ENCODE measurements at regions of chr9 and their contacts with region 1.

Region 1: DNA sequence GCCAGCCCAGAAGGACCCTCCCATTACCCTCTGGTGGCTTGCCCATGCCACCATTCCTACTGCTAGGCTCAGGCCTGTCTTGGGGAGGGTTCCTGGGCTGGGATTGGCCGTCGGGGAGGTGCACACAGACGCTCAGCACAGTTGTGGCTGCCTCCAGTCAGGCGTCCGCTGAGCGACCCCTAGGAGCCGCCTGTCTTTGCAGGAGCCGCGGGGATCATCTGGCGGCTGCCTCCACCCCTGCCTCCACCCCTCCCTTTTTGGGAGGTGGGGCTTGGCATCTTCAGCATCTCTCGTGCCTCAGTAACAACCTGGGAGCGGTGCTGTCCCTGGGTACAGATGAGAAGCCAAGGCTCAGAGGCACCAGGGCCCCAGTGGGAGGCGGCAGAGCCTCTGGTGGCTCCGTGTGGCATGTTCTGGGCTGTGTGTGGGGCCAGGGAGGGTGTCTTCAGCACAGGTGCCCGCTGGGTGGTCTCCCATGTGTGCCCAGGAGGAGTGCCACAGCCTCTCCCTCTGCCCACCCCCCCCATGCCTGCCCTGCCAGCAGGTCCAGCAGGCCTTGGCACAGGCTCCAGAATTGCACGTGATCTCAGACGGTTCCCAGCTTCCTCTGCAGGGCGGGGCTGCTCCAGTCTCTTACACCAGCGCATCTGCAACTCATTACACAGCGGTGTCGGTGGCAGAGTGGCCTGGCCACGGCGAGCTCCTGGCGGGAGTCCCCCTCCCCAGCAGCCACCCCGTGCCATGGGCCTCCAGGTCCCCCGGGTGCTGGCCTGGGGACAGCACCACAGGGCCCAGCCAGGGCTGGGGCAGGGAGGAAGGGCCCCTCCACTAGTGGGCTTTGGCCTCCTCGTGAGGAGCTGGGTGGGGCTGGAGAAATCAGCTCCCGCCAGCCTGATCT is 39.8 kb downstream of the RXRA start:
- DNase-seq: peak; percentile 89 to 96 (median 91)
- ATAC-seq: peak; percentile 83 to 90 (median 86)
- H3K4me3 ChIP-seq: peak overlapping the region in 9 of 12 donors; percentile 9 to 37 (median 23)
- H3K27ac ChIP-seq: peak overlapping the region in 11 of 12 donors; percentile 45 to 93 (median 80)
- H3K4me1 ChIP-seq: peaks cover 15 to 92% (median 68%) of the 10 kb centered on the region in 12 donors
- H3K27me3 ChIP-seq: no peaks in the 10 kb centered on the region
- CTCF ChIP-seq: peak in 4 of 12 donors; percentile 12 to 38 (median 26)
- POLR2A ChIP-seq: peak in 1 of 2 donors; percentile 49

Region 2: DNA sequence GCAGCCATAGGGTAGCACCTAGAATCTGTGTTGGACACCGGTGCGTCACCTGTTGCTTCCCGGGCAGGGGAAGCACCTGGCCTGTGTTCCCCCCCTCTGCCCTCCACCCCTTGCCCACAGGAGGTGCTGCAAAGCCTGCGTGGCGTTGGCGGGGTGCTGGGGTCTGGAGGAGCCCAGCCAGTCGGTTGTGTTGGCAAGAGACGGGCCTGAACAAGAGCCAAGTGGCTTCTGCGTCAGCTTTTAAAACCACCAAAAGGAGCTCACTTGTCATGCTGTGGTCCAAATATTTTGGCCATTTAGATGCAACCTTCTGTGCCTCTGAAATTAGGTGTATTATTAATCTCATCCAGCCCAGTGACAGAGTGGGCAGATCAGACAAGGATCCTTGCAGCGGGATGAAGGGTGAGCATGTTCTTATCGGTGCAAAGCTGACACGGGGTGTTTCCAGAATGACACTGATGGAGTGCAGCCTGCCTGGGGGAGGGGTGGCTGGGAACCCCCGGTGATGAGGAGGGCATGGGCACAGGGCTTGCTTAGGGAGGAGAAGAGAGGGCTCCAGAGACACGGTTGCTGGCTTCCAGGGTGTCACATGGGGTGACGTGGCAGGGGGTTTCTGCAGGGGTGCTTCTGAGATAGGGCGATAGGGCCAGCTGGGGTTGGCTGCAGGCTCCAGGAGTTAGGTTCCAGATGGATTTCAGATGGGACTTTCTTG is 49.4 kb before region 1 on chr9:
- intact Hi-C with region 1: no loop called
- DNase-seq: peak in 4 of 5 donors; percentile 65 to 68 (median 67)
- ATAC-seq: peak; percentile 62 to 82 (median 80)
- H3K4me3 ChIP-seq: no peak overlapping the region
- H3K27ac ChIP-seq: peak overlapping the region in 2 of 12 donors; percentile 20 to 42
- H3K4me1 ChIP-seq: peaks cover 0 to 19% (median 11%) of the 10 kb centered on the region in 12 donors
- H3K27me3 ChIP-seq: no peaks in the 10 kb centered on the region
- CTCF ChIP-seq: no peak
- POLR2A ChIP-seq: no peak

Region 3: DNA sequence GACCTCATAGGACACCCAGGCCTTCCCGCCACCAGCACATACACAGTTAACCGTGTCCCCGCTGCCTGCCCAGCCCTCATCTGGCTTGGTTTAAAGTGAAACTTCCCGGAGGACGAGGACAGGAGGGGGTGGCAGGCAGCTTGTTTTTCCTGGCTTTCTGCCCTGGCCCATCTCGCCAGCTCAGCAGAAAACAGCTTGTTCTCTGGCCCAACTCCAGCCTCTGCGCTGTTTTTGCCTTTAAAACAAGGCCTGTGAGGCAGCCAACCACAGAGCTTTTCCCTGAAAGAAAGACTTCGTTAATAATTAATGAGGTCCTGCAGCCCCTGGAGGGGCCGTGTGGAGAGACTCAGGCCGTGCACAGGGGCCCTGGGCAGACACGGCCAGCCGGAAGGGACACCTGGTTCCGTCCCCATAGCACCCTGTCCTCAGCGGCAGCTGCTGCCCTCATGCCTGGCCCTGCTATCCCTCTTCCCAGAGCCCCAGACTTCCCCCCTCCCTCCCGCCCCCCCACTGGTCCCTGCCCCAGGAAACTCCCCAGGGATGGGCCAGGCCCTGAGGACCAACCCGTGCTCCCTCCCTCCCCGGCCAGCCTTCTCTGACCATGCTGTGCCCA is 69.0 kb after region 1 on chr9:
- intact Hi-C with region 1: loop called in 3 of 10 experiments (anchors 5 to 10 kb)
- DNase-seq: peak; percentile 94 to 98 (median 96)
- ATAC-seq: peak; percentile 81 to 89 (median 83)
- H3K4me3 ChIP-seq: peak overlapping the region in 7 of 12 donors; percentile 0 to 29 (median 11)
- H3K27ac ChIP-seq: peak overlapping the region; percentile 70 to 91 (median 84)
- H3K4me1 ChIP-seq: peaks cover 4 to 88% (median 58%) of the 10 kb centered on the region in 12 donors
- H3K27me3 ChIP-seq: no peaks in the 10 kb centered on the region
- CTCF ChIP-seq: no peak
- POLR2A ChIP-seq: no peak